ENCODE measurements at regions of chr19 and their contacts with region 1.

Region 1: DNA sequence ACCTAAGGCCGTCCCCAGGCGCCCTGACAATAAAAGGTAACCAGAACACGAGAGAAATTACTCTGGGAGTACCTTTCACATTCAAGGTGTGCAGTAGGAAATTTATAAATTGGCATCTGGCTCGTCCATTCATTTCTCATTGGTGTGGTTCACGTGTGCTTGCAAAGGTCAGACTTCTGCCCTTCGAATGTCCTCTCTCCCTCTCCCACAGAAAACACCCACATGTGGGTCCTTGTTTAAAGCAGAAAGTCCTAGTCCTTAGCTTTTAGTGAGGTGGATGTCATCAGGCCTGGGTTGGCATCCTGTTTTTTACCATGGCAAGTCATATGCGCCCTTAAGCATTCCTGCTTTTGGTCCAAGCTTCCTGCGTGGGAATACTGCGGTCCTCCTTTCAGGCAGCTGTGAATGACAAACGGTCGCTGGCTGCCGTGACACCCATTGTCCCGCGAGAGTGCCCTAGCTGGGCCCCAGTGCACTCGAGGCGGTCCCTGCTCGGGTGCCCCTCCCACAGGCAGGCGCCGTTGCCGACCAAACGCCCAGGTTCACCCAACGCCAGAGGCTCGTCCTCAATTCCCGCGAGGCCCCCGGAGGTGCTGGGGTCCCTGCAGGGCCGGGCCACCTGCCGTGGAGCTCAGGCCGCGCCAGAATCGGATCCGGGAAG is at the start of gene NUDT19:
- DNase-seq: peak; percentile 88
- H3K4me3 ChIP-seq: peak within 1 kb of the TSS; percentile 62
- H3K27ac ChIP-seq: peak within 1 kb of the TSS; percentile 81
- H3K4me1 ChIP-seq: no peaks in the 10 kb centered on the region
- H3K27me3 ChIP-seq: no peaks in the 10 kb centered on the region
- CTCF ChIP-seq: no peak
- total RNA-seq, gene NUDT19: 17.8 and 18.7 TPM in 2 replicates

Region 2: GRCh38 chr19:32650671-32651070 is 40.8 kb before region 1 on chr19:
- CTCF ChIA-PET with region 1: interaction called, 10 read pairs
- POLR2A ChIA-PET with region 1: no interaction called
- intact Hi-C with region 1: no loop called
- DNase-seq: no peak
- H3K4me3 ChIP-seq: no peak overlapping the region
- H3K27ac ChIP-seq: no peak overlapping the region
- H3K4me1 ChIP-seq: peaks cover 8% of the 10 kb centered on the region
- H3K27me3 ChIP-seq: no peaks in the 10 kb centered on the region
- CTCF ChIP-seq: no peak

Region 3: GRCh38 chr19:32971715-32972540 is 280.5 kb after region 1 on chr19 and contains the starts of genes CEP89 and FAAP24:
- CTCF ChIA-PET with region 1: interaction called, 3 read pairs
- POLR2A ChIA-PET with region 1: no interaction called
- intact Hi-C with region 1: loop called (anchors 5 kb)
- DNase-seq: peak; percentile 99
- H3K4me3 ChIP-seq: peak within 1 kb of the TSS; percentile 72
- H3K27ac ChIP-seq: peak within 1 kb of the TSS; percentile 63
- H3K4me1 ChIP-seq: peaks cover 7% of the 10 kb centered on the region
- H3K27me3 ChIP-seq: no peaks in the 10 kb centered on the region
- CTCF ChIP-seq: no peak
- total RNA-seq, gene CEP89: 38.7 and 47.2 TPM in 2 replicates
- total RNA-seq, gene FAAP24: 10.0 and 11.1 TPM in 2 replicates

Measured in A673 (cell line).